ENCODE measurements at regions of chrX and their contacts with region 1.

Region 1: GRCh38 chrX:152941328-152942106 is 43.6 kb downstream of the ZNF185 start:
- DNase-seq: peak; percentile 82 to 93 (median 89)
- H3K4me3 ChIP-seq: peak overlapping the region; percentile 59
- H3K4me3 Mint-ChIP-seq: peak overlapping the region; percentile 76 to 89 (median 85)
- H3K27ac ChIP-seq: peak overlapping the region; percentile 9
- H3K27ac Mint-ChIP-seq: peak overlapping the region; percentile 64 to 88 (median 84)
- H3K4me1 ChIP-seq: peaks cover 8% of the 10 kb centered on the region
- H3K4me1 Mint-ChIP-seq: peaks cover 6 to 9% (median 9%) of the 10 kb centered on the region in 3 donors
- H3K27me3 ChIP-seq: no peaks in the 10 kb centered on the region
- H3K27me3 Mint-ChIP-seq: peaks cover 0 to 4% of the 10 kb centered on the region in 2 donors

Region 2: GRCh38 chrX:152843852-152844251 is 97.7 kb before region 1 on chrX:
- CTCF ChIA-PET with region 1: no interaction called
- POLR2A ChIA-PET with region 1: no interaction called
- DNase-seq: no peak
- H3K4me3 ChIP-seq: no peak overlapping the region
- H3K4me3 Mint-ChIP-seq: no peak overlapping the region
- H3K27ac ChIP-seq: no peak overlapping the region
- H3K27ac Mint-ChIP-seq: no peak overlapping the region
- H3K4me1 ChIP-seq: no peaks in the 10 kb centered on the region
- H3K4me1 Mint-ChIP-seq: peaks cover 0 to 10% (median 0%) of the 10 kb centered on the region in 3 donors
- H3K27me3 ChIP-seq: no peaks in the 10 kb centered on the region
- H3K27me3 Mint-ChIP-seq: peaks cover 0 to 8% of the 10 kb centered on the region in 2 donors

Region 3: GRCh38 chrX:152958524-152959465 is 17.3 kb after region 1 on chrX:
- CTCF ChIA-PET with region 1: interaction called, 16 read pairs
- POLR2A ChIA-PET with region 1: interaction called, 7 read pairs
- DNase-seq: peak; percentile 81 to 93 (median 89)
- H3K4me3 ChIP-seq: no peak overlapping the region
- H3K4me3 Mint-ChIP-seq: peak overlapping the region; percentile 70 to 88 (median 79)
- H3K27ac ChIP-seq: peak overlapping the region; percentile 54
- H3K27ac Mint-ChIP-seq: peak overlapping the region; percentile 84 to 96 (median 88)
- H3K4me1 ChIP-seq: peaks cover 4% of the 10 kb centered on the region
- H3K4me1 Mint-ChIP-seq: peaks cover 3 to 17% (median 10%) of the 10 kb centered on the region in 3 donors
- H3K27me3 ChIP-seq: no peaks in the 10 kb centered on the region
- H3K27me3 Mint-ChIP-seq: no peaks in the 10 kb centered on the region

Region 4: DNA sequence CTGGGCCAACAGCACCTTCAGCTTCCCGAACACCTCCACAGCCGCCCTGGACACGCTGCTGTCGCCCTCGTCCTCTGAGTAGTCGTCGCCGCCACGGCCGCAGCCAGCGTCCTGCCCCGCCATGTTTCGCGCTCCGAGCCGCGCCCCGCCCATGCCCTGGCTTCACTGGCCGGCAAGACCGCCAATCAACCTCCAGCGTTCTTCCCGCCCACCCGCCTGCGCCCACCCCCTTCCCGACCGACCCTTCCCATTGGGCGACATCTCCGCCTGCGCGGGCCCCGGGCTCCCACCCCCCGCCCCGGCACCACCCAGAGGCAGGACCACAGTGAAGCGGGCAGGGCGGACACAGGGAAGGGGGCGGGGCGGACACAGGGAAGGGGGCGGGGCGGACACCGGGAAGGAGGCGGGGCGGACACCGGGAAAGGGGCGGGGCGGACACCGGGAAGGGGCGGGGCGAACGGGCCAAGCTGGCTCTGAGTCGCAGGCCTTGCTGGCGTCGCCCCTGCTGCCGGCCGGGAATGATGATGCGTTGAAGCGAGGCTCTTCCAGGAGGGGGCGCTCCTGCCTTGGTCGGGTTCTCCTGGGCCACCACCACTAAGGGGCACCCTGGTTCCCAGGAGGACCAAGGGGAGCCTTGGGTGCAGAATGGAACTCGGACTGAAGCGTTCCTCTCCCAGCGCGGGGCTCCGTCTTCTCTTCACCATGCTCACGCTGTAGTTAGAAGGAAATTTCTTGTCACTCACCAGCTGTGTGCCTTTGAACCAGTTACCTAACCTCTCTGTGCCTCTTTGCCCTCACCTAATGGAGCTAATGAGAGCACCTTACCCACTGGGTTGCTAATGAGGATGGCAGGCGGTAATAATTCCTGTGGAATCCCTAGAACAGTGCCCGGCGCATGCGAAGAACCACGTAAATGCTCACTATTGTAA is 529.2 kb after region 1 on chrX and contains the start of gene HAUS7:
- CTCF ChIA-PET with region 1: interaction called, 11 read pairs
- POLR2A ChIA-PET with region 1: interaction called, 5 read pairs
- DNase-seq: peak; percentile 81 to 91 (median 83)
- H3K4me3 ChIP-seq: peak within 1 kb of the TSS; percentile 80
- H3K4me3 Mint-ChIP-seq: peak within 1 kb of the TSS; percentile 79 to 92 (median 82)
- H3K27ac ChIP-seq: peak within 1 kb of the TSS; percentile 59
- H3K27ac Mint-ChIP-seq: peak within 1 kb of the TSS; percentile 45 to 91 (median 76)
- H3K4me1 ChIP-seq: peaks cover 16% of the 10 kb centered on the region
- H3K4me1 Mint-ChIP-seq: peaks cover 5 to 27% (median 19%) of the 10 kb centered on the region in 3 donors
- H3K27me3 ChIP-seq: no peaks in the 10 kb centered on the region
- H3K27me3 Mint-ChIP-seq: peaks cover 0 to 1% of the 10 kb centered on the region in 2 donors
- total RNA-seq, gene HAUS7: 70.2 to 73.8 TPM

Region 5: GRCh38 chrX:153662266-153662665 is 720.7 kb after region 1 on chrX:
- CTCF ChIA-PET with region 1: interaction called, 19 read pairs
- POLR2A ChIA-PET with region 1: no interaction called
- DNase-seq: peak; percentile 35 to 68 (median 44)
- H3K4me3 ChIP-seq: no peak overlapping the region
- H3K4me3 Mint-ChIP-seq: peak overlapping the region; percentile 30 to 70 (median 63)
- H3K27ac ChIP-seq: no peak overlapping the region
- H3K27ac Mint-ChIP-seq: peak overlapping the region in 1 of 8 donors; percentile 9
- H3K4me1 ChIP-seq: no peaks in the 10 kb centered on the region
- H3K4me1 Mint-ChIP-seq: peaks cover 0 to 6% (median 4%) of the 10 kb centered on the region in 3 donors
- H3K27me3 ChIP-seq: no peaks in the 10 kb centered on the region
- H3K27me3 Mint-ChIP-seq: peaks cover 12 to 25% of the 10 kb centered on the region in 2 donors